Body of pancreas (tissue), 4 donors: ENCODE measurements at regions of chr3 and their contacts with region 1.

Region 1: GRCh38 chr3:151146071-151146730 is 56.8 kb downstream of the GPR171 start:
- DNase-seq: peak; percentile 72 to 82 (median 76)
- ATAC-seq: peak; percentile 96
- H3K4me3 ChIP-seq: no peak overlapping the region
- H3K27ac ChIP-seq: no peak overlapping the region
- H3K4me1 ChIP-seq: peaks cover 4% of the 10 kb centered on the region
- H3K27me3 ChIP-seq: no peaks in the 10 kb centered on the region
- CTCF ChIP-seq: peak; percentile 76 to 91 (median 87)
- POLR2A ChIP-seq: no peak

Region 2: GRCh38 chr3:150721285-150722130 is 424.7 kb before region 1 on chr3:
- intact Hi-C with region 1: loop called (anchors 5 kb)
- DNase-seq: no peak
- ATAC-seq: peak; percentile 71
- H3K4me3 ChIP-seq: no peak overlapping the region
- H3K27ac ChIP-seq: no peak overlapping the region
- H3K4me1 ChIP-seq: no peaks in the 10 kb centered on the region
- H3K27me3 ChIP-seq: no peaks in the 10 kb centered on the region
- CTCF ChIP-seq: peak; percentile 37 to 92 (median 86)
- POLR2A ChIP-seq: no peak

Region 3: DNA sequence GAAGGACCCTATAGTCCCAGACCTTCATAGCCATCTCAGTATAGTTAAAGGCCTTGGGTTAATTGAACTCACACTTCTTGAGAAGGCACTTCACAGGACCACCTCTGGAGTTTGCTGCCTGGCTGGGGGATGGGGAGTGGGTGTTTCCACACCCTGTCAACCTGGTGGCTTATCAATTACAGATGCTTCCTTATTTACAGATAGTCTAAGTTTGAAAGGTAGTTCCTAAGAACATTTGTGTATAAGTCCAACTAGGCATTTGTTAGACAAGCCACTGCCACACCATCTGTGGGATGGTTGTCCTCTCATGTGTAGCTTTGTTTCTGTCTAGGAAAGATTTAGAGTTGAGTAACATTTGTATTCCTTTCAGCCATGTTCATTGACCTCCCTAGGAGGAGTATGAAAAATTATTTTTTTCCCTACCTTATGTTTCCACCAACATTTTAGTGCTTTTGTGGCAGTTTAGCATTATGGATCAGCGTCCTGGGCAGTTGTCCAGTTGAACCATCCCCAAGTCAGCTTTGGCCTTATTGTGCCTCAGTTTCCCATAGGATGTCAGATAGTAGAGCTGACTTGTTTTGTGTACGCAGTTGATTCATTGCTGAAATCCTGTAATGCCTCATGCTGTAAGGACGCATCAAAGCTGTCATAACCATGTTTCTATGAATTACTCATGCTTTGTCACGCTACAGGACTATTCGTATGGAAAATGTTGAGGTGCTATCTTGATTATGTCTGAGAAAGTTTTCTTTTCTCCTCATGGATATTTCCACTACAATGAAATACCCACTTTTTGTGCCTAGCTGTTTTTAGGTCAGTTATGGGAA is 362.1 kb before region 1 on chr3:
- intact Hi-C with region 1: loop called (anchors 5 kb)
- DNase-seq: no peak
- ATAC-seq: no peak
- H3K4me3 ChIP-seq: no peak overlapping the region
- H3K27ac ChIP-seq: no peak overlapping the region
- H3K4me1 ChIP-seq: peaks cover 5% of the 10 kb centered on the region
- H3K27me3 ChIP-seq: no peaks in the 10 kb centered on the region
- CTCF ChIP-seq: no peak
- POLR2A ChIP-seq: no peak

Region 4: DNA sequence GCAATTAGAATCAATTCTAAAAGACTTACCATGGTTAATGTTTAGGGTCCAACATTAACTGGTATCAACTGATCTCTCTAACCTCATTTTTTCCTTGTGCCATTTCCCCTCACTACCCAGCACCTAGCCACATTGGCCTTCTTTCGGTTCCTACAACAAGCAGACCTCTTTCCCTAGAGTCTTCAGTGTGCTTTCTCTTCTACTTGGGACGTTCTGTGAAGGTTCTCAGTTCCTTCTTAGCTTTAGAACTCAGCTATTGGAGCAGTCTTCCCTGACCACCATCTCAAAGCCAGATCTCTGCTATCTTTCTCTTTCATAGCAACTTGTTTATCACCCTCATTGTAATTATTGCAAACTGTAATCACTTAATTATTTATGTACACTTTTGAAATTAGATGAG is 209.5 kb before region 1 on chr3:
- intact Hi-C with region 1: loop called (anchors 10 kb)
- DNase-seq: no peak
- ATAC-seq: no peak
- H3K4me3 ChIP-seq: no peak overlapping the region
- H3K27ac ChIP-seq: no peak overlapping the region
- H3K4me1 ChIP-seq: no peaks in the 10 kb centered on the region
- H3K27me3 ChIP-seq: no peaks in the 10 kb centered on the region
- CTCF ChIP-seq: no peak
- POLR2A ChIP-seq: no peak